ENCODE measurements at regions of chr16 and their contacts with region 1.

Region 1: DNA sequence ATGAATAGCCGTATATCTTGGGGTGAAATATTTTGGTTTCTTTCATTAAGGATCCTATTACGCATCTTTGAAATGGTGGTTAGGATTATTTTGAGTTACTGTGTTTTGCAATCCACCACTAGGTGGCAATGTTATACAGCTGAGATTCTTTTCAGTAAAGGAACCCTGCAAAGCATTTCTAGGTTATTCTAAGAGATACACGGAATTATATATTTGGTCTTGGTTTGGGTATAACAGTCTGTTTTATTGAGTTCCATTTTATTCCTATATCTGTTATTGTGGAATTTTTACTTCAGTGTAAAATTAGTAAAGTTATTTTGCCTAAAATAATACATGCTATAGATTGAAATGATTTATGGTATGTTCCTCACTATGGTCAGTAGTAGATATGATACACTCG is 62.9 kb upstream of the CPHXL start:
- DNase-seq: no peak
- H3K4me3 Mint-ChIP-seq: no peak overlapping the region
- H3K27ac Mint-ChIP-seq: no peak overlapping the region
- H3K4me1 Mint-ChIP-seq: no peaks in the 10 kb centered on the region
- H3K27me3 Mint-ChIP-seq: peaks cover 2% of the 10 kb centered on the region

Region 2: GRCh38 chr16:76653390-76654026 is 864.3 kb after region 1 on chr16:
- intact Hi-C with region 1: loop called (anchors 1 kb)
- DNase-seq: no peak
- H3K4me3 Mint-ChIP-seq: no peak overlapping the region
- H3K27ac Mint-ChIP-seq: no peak overlapping the region
- H3K4me1 Mint-ChIP-seq: no peaks in the 10 kb centered on the region
- H3K27me3 Mint-ChIP-seq: no peaks in the 10 kb centered on the region

Region 3: DNA sequence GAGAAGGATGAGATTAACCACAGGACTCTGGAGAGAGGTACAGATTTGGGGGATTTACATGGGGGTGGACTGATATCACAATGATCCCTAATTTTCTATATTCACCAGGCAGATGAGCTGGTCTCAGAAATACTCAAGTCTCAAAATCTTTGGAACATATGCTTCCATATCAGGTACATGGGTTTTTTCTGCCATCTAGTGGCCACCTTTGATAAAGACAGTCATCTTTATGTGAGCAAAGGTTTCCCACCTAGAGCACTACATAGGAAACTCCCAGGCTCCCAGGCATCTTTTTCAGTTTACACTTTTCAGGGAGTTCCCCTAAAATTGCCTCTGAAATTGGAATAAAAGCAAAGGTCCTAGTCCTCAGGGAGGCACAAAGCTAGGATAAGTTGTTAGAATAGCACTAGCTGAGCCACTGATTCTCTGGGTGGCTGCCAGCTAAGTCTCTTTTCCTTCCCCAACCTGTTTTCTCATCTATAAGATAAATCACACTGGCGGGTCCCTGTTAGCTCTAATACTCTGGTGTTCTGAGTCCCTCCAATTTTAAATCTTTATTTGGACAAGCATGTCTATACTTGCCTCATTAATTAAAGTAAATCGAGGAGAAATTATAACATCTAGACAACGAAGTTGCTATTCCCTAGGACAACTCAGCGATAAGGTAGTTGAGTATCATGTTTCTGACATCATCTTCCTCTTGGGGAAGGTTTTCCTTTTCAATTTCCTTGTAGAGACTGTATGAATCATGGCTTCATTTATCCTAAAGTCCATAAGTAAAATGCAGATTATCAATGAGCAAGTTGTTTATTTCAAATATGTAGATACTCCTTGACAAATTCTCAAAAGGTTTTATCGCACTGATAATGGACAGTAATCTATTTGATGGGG is 1382.8 kb after region 1 on chr16:
- intact Hi-C with region 1: loop called (anchors 1 kb)
- DNase-seq: no peak
- H3K4me3 Mint-ChIP-seq: no peak overlapping the region
- H3K27ac Mint-ChIP-seq: no peak overlapping the region
- H3K4me1 Mint-ChIP-seq: no peaks in the 10 kb centered on the region
- H3K27me3 Mint-ChIP-seq: peaks cover 11% of the 10 kb centered on the region